Activated B cell treated with CpG ODN at 0.5 μM for 24 hours (primary cell): ENCODE measurements at regions of chr10 and their contacts with region 1.

Region 1: DNA sequence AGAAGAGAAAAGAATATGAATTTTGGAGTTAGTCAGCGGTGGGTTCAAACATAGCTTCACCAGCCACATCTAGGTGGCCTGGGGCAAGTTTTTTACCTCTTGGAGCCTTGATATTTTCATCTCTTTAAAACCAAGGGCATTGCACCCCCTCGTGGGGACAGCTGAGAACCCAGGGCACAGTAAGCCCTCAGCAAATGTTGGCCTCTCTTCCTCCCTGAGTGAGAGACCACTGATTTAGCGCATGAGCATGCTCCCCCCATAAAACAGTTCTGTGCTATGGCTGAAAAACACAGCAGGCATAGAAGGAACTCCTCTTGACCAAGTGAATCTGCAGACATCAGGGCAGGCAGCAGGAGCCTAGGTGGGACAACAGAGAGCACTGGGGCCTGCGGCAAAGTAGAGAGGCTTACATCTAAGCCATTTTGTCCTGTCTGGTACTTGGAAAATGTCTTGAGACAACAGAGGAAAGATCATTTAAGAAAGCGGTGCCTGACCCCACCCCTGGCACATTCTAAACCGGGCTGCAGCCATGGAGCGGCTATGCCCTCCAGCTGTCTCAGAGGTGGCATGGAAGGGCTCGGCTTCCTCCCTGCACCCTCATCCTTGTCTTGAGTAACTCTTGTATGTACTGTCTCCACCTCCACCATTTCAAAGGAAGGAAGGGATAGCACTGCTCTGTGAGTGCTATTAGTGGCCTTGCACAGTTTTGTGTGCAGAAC is 94.7 kb downstream of the ARHGAP22 start:
- DNase-seq: no peak
- ATAC-seq: no peak
- H3K4me3 Mint-ChIP-seq: no peak overlapping the region
- H3K27ac Mint-ChIP-seq: no peak overlapping the region
- H3K4me1 Mint-ChIP-seq: peaks cover 11% of the 10 kb centered on the region
- H3K27me3 Mint-ChIP-seq: no peaks in the 10 kb centered on the region
- CTCF ChIP-seq: no peak

Region 2: GRCh38 chr10:48363617-48364355 is 146.3 kb before region 1 on chr10:
- CTCF ChIA-PET with region 1: interaction called, 3 read pairs
- POLR2A ChIA-PET with region 1: interaction called, 9 read pairs
- intact Hi-C with region 1: loop called (anchors 1 kb)
- DNase-seq: no peak
- ATAC-seq: no peak
- H3K4me3 Mint-ChIP-seq: no peak overlapping the region
- H3K27ac Mint-ChIP-seq: no peak overlapping the region
- H3K4me1 Mint-ChIP-seq: peaks cover 3% of the 10 kb centered on the region
- H3K27me3 Mint-ChIP-seq: no peaks in the 10 kb centered on the region
- CTCF ChIP-seq: no peak

Region 3: GRCh38 chr10:48496831-48497779 is 13.0 kb before region 1 on chr10:
- CTCF ChIA-PET with region 1: no interaction called
- POLR2A ChIA-PET with region 1: no interaction called
- intact Hi-C with region 1: no loop called
- DNase-seq: peak; percentile 9
- ATAC-seq: no peak
- H3K4me3 Mint-ChIP-seq: no peak overlapping the region
- H3K27ac Mint-ChIP-seq: no peak overlapping the region
- H3K4me1 Mint-ChIP-seq: peaks cover 11% of the 10 kb centered on the region
- H3K27me3 Mint-ChIP-seq: peaks cover 6% of the 10 kb centered on the region
- CTCF ChIP-seq: no peak